ENCODE measurements at regions of chr10 and their contacts with region 1.

Region 1: DNA sequence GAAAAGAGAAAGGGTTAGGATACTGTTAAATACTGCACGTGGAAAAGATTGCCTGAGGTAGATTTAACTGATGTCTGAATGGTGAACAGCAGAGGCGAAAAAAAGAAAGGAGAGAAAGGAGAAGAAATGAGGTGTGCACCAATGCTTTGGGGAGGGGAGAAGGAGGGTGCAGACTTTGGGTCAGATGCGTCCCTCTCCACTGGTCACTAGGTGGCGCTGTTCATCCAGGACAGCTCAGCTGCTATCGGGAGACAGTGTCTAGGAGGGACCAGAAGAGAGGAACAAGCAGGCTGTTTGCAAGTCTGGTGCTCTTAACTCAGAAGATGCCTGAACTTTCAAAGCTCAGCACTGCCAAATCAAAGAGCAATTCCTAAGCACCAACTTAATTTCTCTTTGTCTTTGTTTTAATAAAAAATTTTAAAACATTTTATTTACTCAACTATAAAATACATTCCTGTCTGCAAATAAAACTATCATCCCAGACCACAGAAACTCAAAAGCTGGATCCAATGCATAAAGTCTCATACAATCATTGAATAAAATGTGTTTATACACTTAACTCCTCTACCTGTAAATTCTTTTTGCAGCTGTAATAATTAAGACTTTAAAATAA is 83.9 kb upstream of the PDLIM1 start:
- DNase-seq: peak; percentile 61
- ATAC-seq: peak; percentile 100
- H3K4me3 ChIP-seq: no peak overlapping the region
- H3K27ac ChIP-seq: no peak overlapping the region
- H3K4me1 ChIP-seq: no peaks in the 10 kb centered on the region
- H3K27me3 ChIP-seq: 0 out of 2 replicates have a peak, but pooled peaks cover 8% of the 10 kb centered on the region
- CTCF ChIP-seq: peak; percentile 91 to 94 (median 93)
- POLR2A ChIP-seq: no peak
- RAD21 ChIP-seq: peak; percentile 96

Region 2: GRCh38 chr10:95350219-95350829 is 24.4 kb before region 1 on chr10:
- CTCF ChIA-PET with region 1: no interaction called
- POLR2A ChIA-PET with region 1: no interaction called
- RAD21 ChIA-PET with region 1: no interaction called
- intact Hi-C with region 1: no loop called
- DNase-seq: no peak
- ATAC-seq: no peak
- H3K4me3 ChIP-seq: no peak overlapping the region
- H3K27ac ChIP-seq: no peak overlapping the region
- H3K4me1 ChIP-seq: peaks cover 0 to 18% of the 10 kb centered on the region in 2 experiments; a peak in 2 of 4 replicates
- H3K27me3 ChIP-seq: no peaks in the 10 kb centered on the region
- CTCF ChIP-seq: no peak
- POLR2A ChIP-seq: no peak
- RAD21 ChIP-seq: no peak

Region 3: DNA sequence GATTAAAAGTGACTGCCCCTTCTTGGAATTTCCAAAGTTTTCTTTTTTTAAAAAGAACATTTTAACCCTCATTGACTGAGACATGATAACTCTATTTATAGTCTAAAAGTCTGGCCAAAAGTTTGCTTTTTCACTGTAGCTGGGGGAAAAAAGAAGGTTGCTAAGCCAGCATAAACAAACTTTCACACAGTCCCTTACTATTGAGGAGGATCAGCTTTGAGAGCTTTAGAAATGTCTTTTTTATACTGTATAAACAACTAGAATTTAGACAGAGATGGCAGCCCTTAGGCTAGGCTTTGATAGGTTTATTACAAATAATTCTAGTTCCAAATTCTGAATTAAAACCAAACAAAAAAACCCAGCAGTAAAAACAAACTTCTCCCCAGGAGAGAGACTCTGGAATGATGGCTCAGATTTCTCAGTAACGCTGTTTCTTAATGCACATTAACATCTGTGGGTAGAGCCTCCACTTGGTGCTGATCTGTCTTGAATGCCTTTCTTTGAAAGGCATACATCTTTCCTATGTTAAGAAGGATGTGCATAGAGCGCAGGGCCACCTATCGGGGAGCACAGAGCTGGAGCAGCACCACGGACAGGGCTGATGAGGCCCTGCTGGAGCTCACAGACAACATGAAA is 17.0 kb after region 1 on chr10:
- CTCF ChIA-PET with region 1: interaction called, 19 read pairs
- POLR2A ChIA-PET with region 1: no interaction called
- RAD21 ChIA-PET with region 1: no interaction called
- intact Hi-C with region 1: no loop called
- DNase-seq: no peak
- ATAC-seq: no peak
- H3K4me3 ChIP-seq: no peak overlapping the region
- H3K27ac ChIP-seq: no peak overlapping the region
- H3K4me1 ChIP-seq: peaks cover 4 to 18% of the 10 kb centered on the region in 2 experiments; a peak in 2 of 4 replicates
- H3K27me3 ChIP-seq: no peaks in the 10 kb centered on the region
- CTCF ChIP-seq: no peak
- POLR2A ChIP-seq: no peak
- RAD21 ChIP-seq: no peak

Region 4: GRCh38 chr10:95430231-95430951 is 55.7 kb after region 1 on chr10:
- CTCF ChIA-PET with region 1: interaction called, 11 read pairs
- POLR2A ChIA-PET with region 1: no interaction called
- RAD21 ChIA-PET with region 1: no interaction called
- intact Hi-C with region 1: loop called (anchors 2 kb)
- DNase-seq: peak; percentile 23
- ATAC-seq: peak; percentile 97
- H3K4me3 ChIP-seq: peak overlapping the region in 1 of 2 experiments; percentile 24; a peak in 1 of 4 replicates
- H3K27ac ChIP-seq: no peak overlapping the region
- H3K4me1 ChIP-seq: peaks cover 0 to 5% of the 10 kb centered on the region in 2 experiments; a peak in 1 of 4 replicates
- H3K27me3 ChIP-seq: no peaks in the 10 kb centered on the region
- CTCF ChIP-seq: peak; percentile 94 to 96 (median 94)
- POLR2A ChIP-seq: no peak
- RAD21 ChIP-seq: peak; percentile 96

Region 5: DNA sequence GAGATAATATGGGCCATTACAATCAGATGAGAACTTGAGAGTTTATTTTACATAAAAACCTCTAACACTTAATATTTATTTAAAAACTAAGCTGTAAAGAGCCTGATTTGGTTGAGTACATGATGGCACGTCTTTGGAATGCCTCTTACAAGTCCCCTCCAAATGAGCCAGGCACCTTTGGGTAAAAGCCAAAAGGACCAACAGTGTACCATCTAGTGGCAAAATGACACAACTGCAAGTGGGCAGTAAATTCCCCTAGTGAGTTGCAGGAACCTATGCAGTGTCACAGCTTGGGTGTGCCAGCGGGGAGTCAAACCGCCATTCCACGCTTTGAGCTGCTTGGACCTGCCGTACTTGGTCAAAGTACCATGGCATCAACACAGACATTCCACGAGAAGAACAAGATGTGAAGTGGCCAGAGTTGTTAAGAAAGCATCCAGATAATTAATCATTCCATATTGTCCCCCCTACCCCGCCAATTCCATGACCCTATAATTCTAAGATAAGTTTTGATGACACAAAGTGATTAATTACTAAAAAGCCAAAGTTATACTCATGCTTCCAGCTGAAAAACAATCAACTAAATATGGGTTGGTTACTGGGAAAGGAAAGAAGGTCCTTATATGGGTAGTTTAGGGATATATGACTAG is 71.3 kb after region 1 on chr10:
- CTCF ChIA-PET with region 1: interaction called, 13 read pairs
- POLR2A ChIA-PET with region 1: interaction called, 3 read pairs
- RAD21 ChIA-PET with region 1: no interaction called
- intact Hi-C with region 1: no loop called
- DNase-seq: peak; percentile 80
- ATAC-seq: peak; percentile 90
- H3K4me3 ChIP-seq: 0 out of 4 replicates have a peak overlapping the region, but pooled peaks of 1 of the 2 experiments have one; percentile 9
- H3K27ac ChIP-seq: peak overlapping the region; percentile 36; the same call in 1 of the 2 replicates
- H3K4me1 ChIP-seq: peaks cover 19 to 25% of the 10 kb centered on the region in 2 experiments
- H3K27me3 ChIP-seq: no peaks in the 10 kb centered on the region
- CTCF ChIP-seq: peak; percentile 62 to 90 (median 86); a peak in 5 of 6 replicates
- POLR2A ChIP-seq: no peak
- RAD21 ChIP-seq: peak; percentile 56

Region 6: DNA sequence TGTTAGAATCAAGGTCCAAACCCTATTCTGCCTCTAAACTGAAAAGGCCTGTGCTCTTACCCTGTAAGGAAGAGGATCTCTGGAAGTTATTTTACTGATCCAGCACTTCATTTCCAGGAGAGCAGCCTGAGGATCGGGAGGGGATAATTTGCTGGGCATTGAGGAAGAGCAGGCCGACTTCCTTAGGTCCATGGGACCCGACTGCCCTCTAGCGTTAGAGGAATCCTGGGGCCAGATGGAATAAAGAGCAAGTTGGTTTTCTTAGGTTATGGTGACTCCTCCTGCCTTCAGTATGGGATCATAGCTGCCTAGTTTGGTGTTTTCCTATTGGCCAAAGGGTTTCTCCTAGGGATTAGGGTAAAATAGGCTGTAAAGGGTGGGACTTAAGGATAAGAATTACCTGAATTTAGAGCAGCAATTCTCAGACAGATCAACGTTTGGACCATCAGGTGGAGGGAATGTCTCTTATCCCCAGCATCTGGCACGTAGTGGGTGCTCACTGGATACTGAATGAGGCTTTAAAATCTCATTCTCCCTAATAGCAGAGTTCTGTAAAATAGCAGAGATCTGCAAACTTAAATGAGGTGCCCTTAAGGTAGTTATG is 226.5 kb after region 1 on chr10:
- CTCF ChIA-PET with region 1: interaction called, 86 read pairs
- POLR2A ChIA-PET with region 1: no interaction called
- RAD21 ChIA-PET with region 1: interaction called, 8 to 16 read pairs
- intact Hi-C with region 1: loop called (anchors 1 kb)
- DNase-seq: peak; percentile 90
- ATAC-seq: peak; percentile 97
- H3K4me3 ChIP-seq: no peak overlapping the region
- H3K27ac ChIP-seq: no peak overlapping the region
- H3K4me1 ChIP-seq: no peaks in the 10 kb centered on the region
- H3K27me3 ChIP-seq: no peaks in the 10 kb centered on the region
- CTCF ChIP-seq: peak; percentile 96 to 99 (median 98)
- POLR2A ChIP-seq: no peak
- RAD21 ChIP-seq: peak; percentile 99

Region 7: GRCh38 chr10:95841661-95842498 is 467.2 kb after region 1 on chr10:
- CTCF ChIA-PET with region 1: interaction called, 17 read pairs
- POLR2A ChIA-PET with region 1: no interaction called
- RAD21 ChIA-PET with region 1: interaction called in 1 of 2 experiments, 3 read pairs
- intact Hi-C with region 1: loop called (anchors 1 kb)
- DNase-seq: peak; percentile 50
- ATAC-seq: peak; percentile 80
- H3K4me3 ChIP-seq: no peak overlapping the region
- H3K27ac ChIP-seq: no peak overlapping the region
- H3K4me1 ChIP-seq: no peaks in the 10 kb centered on the region
- H3K27me3 ChIP-seq: 0 out of 2 replicates have a peak, but pooled peaks cover 6% of the 10 kb centered on the region
- CTCF ChIP-seq: peak; percentile 52 to 89 (median 88)
- POLR2A ChIP-seq: no peak
- RAD21 ChIP-seq: peak; percentile 78

Measured in HCT116 (cell line).